ENCODE measurements at regions of chr10 and their contacts with region 1.

Region 1: DNA sequence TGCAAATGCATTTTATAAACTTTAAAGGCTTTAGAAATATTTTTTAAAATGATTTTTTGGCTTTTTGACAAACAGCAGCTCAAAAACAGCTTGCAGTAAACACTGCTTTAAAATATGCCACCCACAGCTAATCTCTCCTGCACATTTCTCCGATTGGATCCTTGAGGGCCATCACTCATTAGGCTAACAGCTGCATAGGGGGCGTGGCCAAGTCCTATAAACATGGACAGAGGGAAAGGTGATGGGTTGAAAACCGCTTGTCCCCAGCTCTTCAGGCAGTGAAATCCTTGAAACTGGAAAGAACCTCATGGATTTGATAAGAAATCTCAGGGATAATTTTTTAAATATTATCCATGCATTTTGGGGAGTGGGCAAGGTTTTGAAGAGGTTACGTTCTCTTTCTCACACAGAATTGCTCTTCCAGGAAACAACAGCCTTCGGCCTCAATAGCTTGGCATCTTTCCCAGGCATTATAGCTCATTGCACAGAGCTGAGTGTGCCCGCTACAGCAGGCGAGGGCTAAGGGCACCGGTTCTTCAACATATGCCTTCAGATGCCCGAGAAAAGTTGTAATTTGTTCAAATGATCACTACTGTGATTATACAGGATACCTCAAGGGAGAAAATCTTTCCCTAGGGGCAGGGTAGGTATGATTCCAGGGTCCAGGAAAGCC is 1.7 kb downstream of the PLEKHS1 start:
- DNase-seq: peak in 1 of 2 experiments; percentile 19
- H3K4me3 ChIP-seq: no peak overlapping the region
- H3K27ac ChIP-seq: no peak overlapping the region
- H3K4me1 ChIP-seq: no peaks in the 10 kb centered on the region
- H3K27me3 ChIP-seq: no peaks in the 10 kb centered on the region
- CTCF ChIP-seq: no peak

Region 2: GRCh38 chr10:114083040-114083439 is 329.9 kb after region 1 on chr10:
- CTCF ChIA-PET with region 1: no interaction called
- POLR2A ChIA-PET with region 1: no interaction called
- intact Hi-C with region 1: loop called (anchors 1 kb)
- DNase-seq: peak in 1 of 2 experiments; percentile 67
- H3K4me3 ChIP-seq: no peak overlapping the region
- H3K27ac ChIP-seq: no peak overlapping the region
- H3K4me1 ChIP-seq: no peaks in the 10 kb centered on the region; the same call in 1 of the 2 replicates
- H3K27me3 ChIP-seq: no peaks in the 10 kb centered on the region
- CTCF ChIP-seq: no peak

Measured in PC-9 (cell line).